WTC11 (cell line): ENCODE measurements at regions of chr1 and their contacts with region 1.

Region 1: GRCh38 chr1:24201941-24202440 is 14.9 kb upstream of the IFNLR1 start:
- DNase-seq: peak; percentile 90
- ATAC-seq: peak; percentile 75
- H3K4me3 Mint-ChIP-seq: no peak overlapping the region
- H3K27ac Mint-ChIP-seq: no peak overlapping the region
- H3K4me1 Mint-ChIP-seq: 0 out of 2 replicates have a peak, but pooled peaks cover 2% of the 10 kb centered on the region
- H3K27me3 Mint-ChIP-seq: no peaks in the 10 kb centered on the region
- CTCF ChIP-seq: peak; percentile 79

Region 2: DNA sequence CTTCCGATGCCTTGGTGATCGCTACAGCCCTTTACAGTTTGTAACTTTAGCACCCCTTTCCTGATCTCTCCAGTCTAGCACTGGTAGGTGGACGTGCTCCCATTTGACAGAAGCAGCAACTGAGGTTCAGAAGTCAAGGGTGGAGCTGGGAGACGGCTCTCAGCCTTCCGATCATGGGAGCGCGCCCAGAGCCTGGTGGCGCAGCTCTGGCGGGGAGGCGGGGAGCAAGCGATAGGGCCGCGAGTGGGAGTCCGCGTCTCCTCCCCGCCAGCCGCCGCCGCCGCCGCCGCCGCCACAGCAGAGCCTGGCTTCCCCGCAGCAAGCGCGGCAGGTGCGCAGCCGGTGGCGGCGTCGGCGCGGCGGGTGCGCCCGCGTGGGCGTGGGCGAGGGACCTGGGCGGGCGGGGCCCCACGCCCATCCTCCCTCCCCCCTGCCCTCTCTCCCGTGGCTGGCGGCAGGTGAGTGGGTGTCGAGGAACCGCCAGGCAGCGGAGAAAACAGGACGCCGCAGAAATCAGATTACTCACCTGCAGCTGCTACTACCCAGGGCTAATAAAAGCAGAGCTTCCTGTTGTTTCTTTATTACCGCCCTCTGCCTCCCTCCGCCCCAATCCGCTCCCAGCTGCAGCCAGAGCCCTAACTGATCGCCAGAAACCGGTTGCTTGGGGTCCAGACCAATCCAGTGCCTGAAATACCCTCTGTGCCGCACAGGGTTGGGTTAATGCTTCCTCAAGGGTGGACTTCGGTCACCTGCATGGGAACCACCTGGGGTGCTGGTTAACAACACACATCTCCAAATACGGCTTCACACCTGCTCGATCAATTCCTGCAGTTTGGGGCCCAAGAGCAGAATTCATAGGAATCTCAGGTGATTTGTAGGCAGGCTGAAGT is 582.4 kb before region 1 on chr1:
- CTCF ChIA-PET with region 1: no interaction called
- POLR2A ChIA-PET with region 1: no interaction called
- DNase-seq: peak; percentile 71
- ATAC-seq: peak; percentile 91
- H3K4me3 Mint-ChIP-seq: peak overlapping the region; percentile 69
- H3K27ac Mint-ChIP-seq: peak overlapping the region; percentile 72; the same call in 1 of the 2 replicates
- H3K4me1 Mint-ChIP-seq: peaks cover 32% of the 10 kb centered on the region
- H3K27me3 Mint-ChIP-seq: peaks cover 32% of the 10 kb centered on the region
- CTCF ChIP-seq: no peak

Region 3: GRCh38 chr1:24070821-24071393 is 131.1 kb before region 1 on chr1:
- CTCF ChIA-PET with region 1: interaction called, 17 read pairs
- POLR2A ChIA-PET with region 1: no interaction called
- DNase-seq: peak; percentile 85
- ATAC-seq: peak; percentile 91
- H3K4me3 Mint-ChIP-seq: peak overlapping the region; percentile 50
- H3K27ac Mint-ChIP-seq: no peak overlapping the region
- H3K4me1 Mint-ChIP-seq: peaks cover 6% of the 10 kb centered on the region; the same call in 1 of the 2 replicates
- H3K27me3 Mint-ChIP-seq: no peaks in the 10 kb centered on the region; the same call in 1 of the 2 replicates
- CTCF ChIP-seq: peak; percentile 77

Region 4: GRCh38 chr1:24186993-24187805 is 14.8 kb before region 1 on chr1 and contains the start of gene IFNLR1:
- CTCF ChIA-PET with region 1: interaction called, 30 read pairs
- POLR2A ChIA-PET with region 1: no interaction called
- DNase-seq: peak; percentile 80
- ATAC-seq: peak; percentile 87
- H3K4me3 Mint-ChIP-seq: peak within 1 kb of the TSS; percentile 78
- H3K27ac Mint-ChIP-seq: peak within 1 kb of the TSS; percentile 79
- H3K4me1 Mint-ChIP-seq: peaks cover 22% of the 10 kb centered on the region
- H3K27me3 Mint-ChIP-seq: no peaks in the 10 kb centered on the region; the same call in 1 of the 2 replicates
- CTCF ChIP-seq: no peak
- total RNA-seq, gene IFNLR1: 6.6 to 7.9 TPM (median 7.7 TPM) in 3 replicates

Region 5: GRCh38 chr1:24289937-24290595 is 88.1 kb after region 1 on chr1:
- CTCF ChIA-PET with region 1: interaction called, 21 read pairs
- POLR2A ChIA-PET with region 1: no interaction called
- DNase-seq: no peak
- ATAC-seq: no peak
- H3K4me3 Mint-ChIP-seq: no peak overlapping the region
- H3K27ac Mint-ChIP-seq: no peak overlapping the region; the same call in 1 of the 2 replicates
- H3K4me1 Mint-ChIP-seq: peaks cover 37% of the 10 kb centered on the region
- H3K27me3 Mint-ChIP-seq: peaks cover 11% of the 10 kb centered on the region
- CTCF ChIP-seq: no peak

Region 6: DNA sequence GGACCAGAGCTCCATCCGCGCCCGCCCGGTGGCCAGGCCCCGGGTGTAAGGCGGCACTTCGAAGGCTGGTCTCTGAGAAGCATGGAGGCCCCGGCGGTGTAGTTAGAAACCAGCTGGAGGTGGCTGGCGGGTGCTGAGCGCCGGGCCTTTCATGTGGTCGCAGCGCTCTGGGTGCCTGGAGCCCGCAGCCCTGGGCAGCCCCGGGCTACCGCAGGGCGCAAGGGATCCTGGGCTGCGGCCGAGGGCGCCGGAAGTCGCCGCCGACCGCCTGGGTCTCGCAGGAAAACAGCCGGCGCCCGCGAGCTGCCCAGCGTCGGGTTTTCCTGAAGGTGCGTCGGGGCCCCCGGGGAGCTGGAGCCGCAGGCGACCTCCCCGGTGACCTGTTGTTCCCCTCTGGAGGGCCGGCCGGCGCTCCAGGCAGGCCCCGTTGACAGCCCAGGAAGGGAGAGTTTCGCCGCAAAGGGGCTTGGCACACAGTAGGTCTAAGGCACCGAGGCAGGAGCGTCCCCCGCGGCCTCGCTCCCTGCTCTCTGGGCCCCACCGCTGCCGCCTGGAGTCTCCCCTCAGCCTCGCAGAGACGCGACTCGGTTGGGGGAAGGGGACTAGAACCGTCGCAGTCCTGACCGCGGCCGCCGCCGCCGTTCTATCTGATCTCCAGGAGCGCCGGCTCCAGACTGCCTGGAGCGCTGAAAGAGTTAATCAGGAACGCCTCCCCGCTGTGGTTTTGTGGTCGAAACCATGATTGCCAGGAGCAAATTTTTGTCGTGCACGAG is 119.9 kb after region 1 on chr1:
- CTCF ChIA-PET with region 1: interaction called, 24 read pairs
- POLR2A ChIA-PET with region 1: no interaction called
- DNase-seq: peak; percentile 65
- ATAC-seq: peak; percentile 25
- H3K4me3 Mint-ChIP-seq: peak overlapping the region; percentile 86
- H3K27ac Mint-ChIP-seq: no peak overlapping the region
- H3K4me1 Mint-ChIP-seq: peaks cover 51% of the 10 kb centered on the region
- H3K27me3 Mint-ChIP-seq: peaks cover 46% of the 10 kb centered on the region
- CTCF ChIP-seq: no peak

Region 7: GRCh38 chr1:24349891-24350290 is 147.9 kb after region 1 on chr1:
- CTCF ChIA-PET with region 1: interaction called, 16 read pairs
- POLR2A ChIA-PET with region 1: no interaction called
- DNase-seq: no peak
- ATAC-seq: no peak
- H3K4me3 Mint-ChIP-seq: no peak overlapping the region
- H3K27ac Mint-ChIP-seq: 0 out of 2 replicates have a peak overlapping the region, but pooled peaks have one; percentile 17
- H3K4me1 Mint-ChIP-seq: no peaks in the 10 kb centered on the region
- H3K27me3 Mint-ChIP-seq: no peaks in the 10 kb centered on the region
- CTCF ChIP-seq: no peak

Region 8: DNA sequence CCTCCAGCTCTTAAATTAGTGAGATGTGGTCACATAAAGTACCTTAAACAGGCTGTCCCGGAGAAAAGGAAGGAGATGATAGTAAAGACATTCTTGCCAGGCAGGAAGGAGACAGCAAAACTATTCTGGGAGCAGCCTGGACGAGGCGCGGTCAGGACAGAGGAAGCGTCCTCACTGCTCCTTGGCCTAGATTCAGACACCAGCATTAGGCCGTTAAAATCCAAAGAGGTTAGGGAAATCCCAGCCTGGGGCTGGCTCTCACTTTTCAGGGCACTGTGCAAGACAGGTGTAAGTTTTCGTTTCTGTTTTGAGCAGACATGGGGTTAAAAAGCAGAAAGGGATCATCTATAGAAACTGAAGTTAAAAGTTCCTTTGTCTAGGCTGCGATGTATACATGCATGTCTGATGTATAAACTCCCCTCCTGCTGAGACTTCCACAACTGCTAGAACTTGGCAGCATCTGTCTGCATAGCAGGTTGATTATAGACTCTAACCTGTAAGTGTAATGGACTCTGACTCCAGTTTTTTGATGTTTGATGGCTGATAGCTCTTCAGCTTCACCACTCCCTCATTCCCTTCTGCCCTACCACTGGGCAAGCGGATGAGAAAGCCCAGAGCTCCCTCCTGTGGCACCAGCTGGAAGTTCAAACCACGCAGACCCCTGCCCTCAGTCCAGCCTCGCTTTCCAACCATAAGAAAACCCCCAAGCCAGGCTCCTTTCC is 190.1 kb after region 1 on chr1:
- CTCF ChIA-PET with region 1: interaction called, 465 read pairs
- POLR2A ChIA-PET with region 1: interaction called, 3 read pairs
- DNase-seq: peak; percentile 84
- ATAC-seq: peak; percentile 91
- H3K4me3 Mint-ChIP-seq: no peak overlapping the region
- H3K27ac Mint-ChIP-seq: no peak overlapping the region
- H3K4me1 Mint-ChIP-seq: peaks cover 34% of the 10 kb centered on the region
- H3K27me3 Mint-ChIP-seq: no peaks in the 10 kb centered on the region
- CTCF ChIP-seq: peak; percentile 72